Vagina (tissue), 2 donors: ENCODE measurements at regions of chr1 and their contacts with region 1.

Region 1: GRCh38 chr1:89762779-89763648 is 57.8 kb upstream of the LRRC8D start:
- DNase-seq: no peak
- H3K4me3 ChIP-seq: peak overlapping the region; percentile 44 to 46
- H3K27ac ChIP-seq: peak overlapping the region; percentile 60
- H3K4me1 ChIP-seq: peaks cover 5% of the 10 kb centered on the region
- H3K27me3 ChIP-seq: no peaks in the 10 kb centered on the region
- CTCF ChIP-seq: peak; percentile 75 to 94 (median 83)
- POLR2A ChIP-seq: no peak

Region 2: DNA sequence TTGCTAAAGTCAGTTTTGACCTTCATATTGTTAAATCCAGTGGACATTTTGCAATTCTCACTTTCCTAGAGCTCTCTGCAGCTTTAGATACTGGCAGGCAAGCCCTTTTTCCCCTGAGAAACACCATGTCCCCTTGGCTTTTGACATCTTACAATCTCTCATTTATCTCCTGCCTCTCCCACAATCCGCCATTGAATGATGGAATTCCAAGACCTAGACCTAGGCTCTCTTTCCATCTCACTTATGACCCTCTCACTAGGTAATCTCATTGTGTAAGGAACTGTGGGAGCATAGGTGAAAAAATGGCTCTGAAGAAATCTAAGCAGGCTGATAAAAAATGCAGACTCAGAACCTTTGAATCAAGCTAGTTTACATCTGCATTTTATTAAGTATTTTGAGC is 772.6 kb before region 1 on chr1:
- intact Hi-C with region 1: no loop called
- DNase-seq: no peak
- H3K4me3 ChIP-seq: no peak overlapping the region
- H3K27ac ChIP-seq: no peak overlapping the region
- H3K4me1 ChIP-seq: peaks cover 41% of the 10 kb centered on the region
- H3K27me3 ChIP-seq: no peaks in the 10 kb centered on the region
- CTCF ChIP-seq: no peak
- POLR2A ChIP-seq: no peak

Region 3: DNA sequence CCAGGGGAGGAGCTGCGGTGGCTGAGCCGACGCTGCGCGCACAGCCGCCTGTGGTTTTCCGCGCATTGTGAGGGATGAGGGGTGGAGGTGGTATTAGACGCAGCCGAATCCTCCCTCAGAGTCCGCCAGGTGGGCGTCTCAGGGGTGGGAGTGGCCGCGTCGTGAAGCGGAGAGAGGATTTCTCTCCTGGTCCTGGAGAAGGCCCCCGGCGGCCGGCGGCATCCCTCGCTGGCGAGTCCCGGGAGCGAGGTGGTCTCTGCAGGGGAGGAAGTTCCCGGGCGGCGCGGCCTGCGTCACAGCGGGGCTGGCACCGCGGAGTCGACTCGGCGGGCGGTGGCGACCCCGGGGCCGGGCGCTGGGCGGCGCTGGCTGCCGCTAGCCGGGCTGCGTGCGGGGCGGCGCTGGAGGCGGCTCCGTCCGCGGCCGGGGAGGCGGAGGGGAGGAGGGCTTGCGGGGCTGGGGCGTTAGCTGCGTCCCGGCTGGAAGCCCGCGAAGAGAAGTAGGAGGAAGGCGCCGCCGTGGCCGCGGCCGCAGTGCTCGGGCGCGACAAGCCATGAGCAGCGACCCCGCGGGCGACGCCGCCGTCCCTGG is 130.3 kb before region 1 on chr1 and contains the start of gene LRRC8C:
- intact Hi-C with region 1: loop called (anchors 5 kb)
- DNase-seq: no peak
- H3K4me3 ChIP-seq: peak within 1 kb of the TSS; percentile 92 to 96
- H3K27ac ChIP-seq: peak within 1 kb of the TSS; percentile 89
- H3K4me1 ChIP-seq: peaks cover 11% of the 10 kb centered on the region
- H3K27me3 ChIP-seq: no peaks in the 10 kb centered on the region
- CTCF ChIP-seq: no peak
- POLR2A ChIP-seq: no peak
- total RNA-seq, gene LRRC8C: 5.4 TPM